SK-N-SH (cell line): ENCODE measurements at regions of chr17 and their contacts with region 1.

Region 1: GRCh38 chr17:42819944-42820535 is 4.0 kb downstream of the BECN1 start:
- DNase-seq: peak; percentile 70
- H3K4me3 ChIP-seq: peak overlapping the region in 1 of 2 experiments; percentile 27; a peak in 1 of 4 replicates
- H3K27ac ChIP-seq: no peak overlapping the region
- H3K4me1 ChIP-seq: peaks cover 7 to 11% of the 10 kb centered on the region in 2 experiments
- H3K27me3 ChIP-seq: no peaks in the 10 kb centered on the region
- CTCF ChIP-seq: peak; percentile 89
- EP300 ChIP-seq: no peak
- RAD21 ChIP-seq: peak; percentile 40

Region 2: DNA sequence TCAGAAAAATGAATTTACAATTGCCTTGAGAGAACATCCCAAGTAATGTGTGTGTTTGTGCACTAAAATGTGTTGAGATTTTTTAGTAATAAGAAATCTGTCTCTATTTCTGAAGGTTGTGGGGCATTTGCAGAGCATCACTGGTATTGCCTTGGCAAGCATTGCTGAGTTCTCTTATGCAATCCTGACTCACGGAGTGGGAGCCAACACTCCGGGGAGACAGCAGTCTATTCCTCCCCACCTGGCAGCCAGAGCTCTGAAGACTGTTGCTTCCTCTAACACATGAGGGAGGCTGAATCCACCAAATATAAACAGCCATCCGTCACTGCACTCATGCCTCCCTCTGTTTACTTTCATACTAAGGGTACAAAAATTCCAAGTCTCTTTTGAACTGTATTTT is 10.8 kb before region 1 on chr17:
- CTCF ChIA-PET with region 1: interaction called, 35 read pairs
- POLR2A ChIA-PET with region 1: interaction called, 3 read pairs
- DNase-seq: no peak
- H3K4me3 ChIP-seq: no peak overlapping the region
- H3K27ac ChIP-seq: peak overlapping the region in 1 of 2 experiments; percentile 36; a peak in 2 of 4 replicates
- H3K4me1 ChIP-seq: peaks cover 1 to 16% of the 10 kb centered on the region in 2 experiments; a peak in 3 of 4 replicates
- H3K27me3 ChIP-seq: no peaks in the 10 kb centered on the region
- CTCF ChIP-seq: no peak
- EP300 ChIP-seq: 0 out of 4 replicates have a peak, but pooled peaks of 1 of the 2 experiments have one; percentile 29
- RAD21 ChIP-seq: no peak